ENCODE measurements at regions of chrX and their contacts with region 1.

Region 1: GRCh38 chrX:111244235-111244750 is 26.0 kb downstream of the CAPN6 start:
- DNase-seq: no peak
- H3K4me3 ChIP-seq: no peak overlapping the region
- H3K27ac ChIP-seq: no peak overlapping the region
- H3K4me1 ChIP-seq: no peaks in the 10 kb centered on the region
- H3K27me3 ChIP-seq: no peaks in the 10 kb centered on the region
- CTCF ChIP-seq: peak in 3 of 4 experiments; percentile 28 to 60 (median 51)
- POLR2A ChIP-seq: no peak

Region 2: GRCh38 chrX:110450050-110450449 is 794.2 kb before region 1 on chrX:
- intact Hi-C with region 1: loop called (anchors 10 kb)
- DNase-seq: peak; percentile 70
- H3K4me3 ChIP-seq: no peak overlapping the region
- H3K27ac ChIP-seq: no peak overlapping the region
- H3K4me1 ChIP-seq: no peaks in the 10 kb centered on the region
- H3K27me3 ChIP-seq: no peaks in the 10 kb centered on the region
- CTCF ChIP-seq: peak; percentile 26 to 72 (median 56)
- POLR2A ChIP-seq: no peak

Region 3: DNA sequence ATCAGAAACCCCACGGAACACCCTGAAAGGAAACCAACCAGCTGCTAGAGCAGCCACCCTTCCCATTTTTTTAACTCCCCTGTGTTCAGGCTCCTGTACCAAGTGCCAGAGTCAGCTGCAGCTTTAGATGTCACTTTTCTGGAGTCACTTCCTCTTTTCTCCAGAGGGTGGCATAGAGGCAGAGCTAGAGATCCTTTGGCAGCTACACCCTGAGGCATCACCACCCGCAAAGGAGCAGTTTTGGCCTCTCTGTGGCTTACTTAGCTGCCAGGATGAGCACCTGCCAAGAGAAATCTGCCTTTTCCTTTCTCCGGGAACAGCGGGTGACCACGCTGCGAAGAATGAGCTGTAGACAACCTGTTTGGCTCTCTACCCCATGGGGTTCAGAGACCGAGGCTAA is 390.7 kb before region 1 on chrX:
- intact Hi-C with region 1: loop called (anchors 10 kb)
- DNase-seq: peak; percentile 20
- H3K4me3 ChIP-seq: no peak overlapping the region
- H3K27ac ChIP-seq: no peak overlapping the region
- H3K4me1 ChIP-seq: no peaks in the 10 kb centered on the region
- H3K27me3 ChIP-seq: no peaks in the 10 kb centered on the region
- CTCF ChIP-seq: peak in 3 of 4 experiments; percentile 14 to 42 (median 37)
- POLR2A ChIP-seq: no peak

Region 4: DNA sequence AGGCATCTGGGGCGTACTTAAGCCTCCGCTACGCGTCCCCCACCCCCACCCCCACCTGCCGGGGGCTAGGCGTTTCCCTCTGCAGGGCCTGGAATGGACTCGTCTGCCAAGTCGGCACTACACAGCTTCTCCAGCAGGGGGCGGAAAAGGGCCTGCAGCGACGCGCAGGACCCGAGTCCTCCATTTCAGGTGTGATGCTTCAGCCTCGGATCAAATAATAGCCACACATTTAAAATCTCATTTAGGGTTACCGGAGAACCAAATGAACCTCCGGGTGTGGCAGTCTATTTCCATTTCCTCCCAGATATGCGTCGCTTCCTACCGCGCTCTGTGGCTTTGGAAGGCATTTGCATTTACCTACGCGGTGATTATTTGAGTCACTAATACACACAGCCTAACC is 145.4 kb before region 1 on chrX:
- intact Hi-C with region 1: loop called (anchors 5 kb)
- DNase-seq: no peak
- H3K4me3 ChIP-seq: no peak overlapping the region
- H3K27ac ChIP-seq: no peak overlapping the region
- H3K4me1 ChIP-seq: no peaks in the 10 kb centered on the region
- H3K27me3 ChIP-seq: no peaks in the 10 kb centered on the region
- CTCF ChIP-seq: peak; percentile 20 to 41 (median 36)
- POLR2A ChIP-seq: no peak

Region 5: GRCh38 chrX:111168314-111168713 is 76.0 kb before region 1 on chrX:
- intact Hi-C with region 1: loop called (anchors 10 kb)
- DNase-seq: no peak
- H3K4me3 ChIP-seq: no peak overlapping the region
- H3K27ac ChIP-seq: no peak overlapping the region
- H3K4me1 ChIP-seq: no peaks in the 10 kb centered on the region
- H3K27me3 ChIP-seq: no peaks in the 10 kb centered on the region
- CTCF ChIP-seq: peak in 1 of 4 experiments; percentile 15
- POLR2A ChIP-seq: no peak

Region 6: GRCh38 chrX:111831343-111831742 is 587.0 kb after region 1 on chrX:
- intact Hi-C with region 1: no loop called
- DNase-seq: no peak
- H3K4me3 ChIP-seq: no peak overlapping the region
- H3K27ac ChIP-seq: no peak overlapping the region
- H3K4me1 ChIP-seq: no peaks in the 10 kb centered on the region
- H3K27me3 ChIP-seq: no peaks in the 10 kb centered on the region
- CTCF ChIP-seq: no peak
- POLR2A ChIP-seq: no peak

Measured in prostate gland (tissue), 2 donors.